ENCODE measurements at regions of chr2 and their contacts with region 1.

Region 1: GRCh38 chr2:39124000-39124745 is 3.3 kb upstream of the SOS1 start:
- DNase-seq: peak; percentile 97
- ATAC-seq: peak; percentile 73
- H3K4me3 ChIP-seq: peak overlapping the region; percentile 72 to 96 (median 85)
- H3K4me3 Mint-ChIP-seq: peak overlapping the region; percentile 86
- H3K27ac ChIP-seq: peak overlapping the region; percentile 87 to 94
- H3K27ac Mint-ChIP-seq: peak overlapping the region; percentile 86
- H3K4me1 ChIP-seq: peaks cover 42 to 43% of the 10 kb centered on the region in 2 donors
- H3K4me1 Mint-ChIP-seq: peaks cover 54% of the 10 kb centered on the region
- H3K27me3 ChIP-seq: no peaks in the 10 kb centered on the region
- H3K27me3 Mint-ChIP-seq: no peaks in the 10 kb centered on the region
- CTCF ChIP-seq: peak; percentile 82

Region 2: DNA sequence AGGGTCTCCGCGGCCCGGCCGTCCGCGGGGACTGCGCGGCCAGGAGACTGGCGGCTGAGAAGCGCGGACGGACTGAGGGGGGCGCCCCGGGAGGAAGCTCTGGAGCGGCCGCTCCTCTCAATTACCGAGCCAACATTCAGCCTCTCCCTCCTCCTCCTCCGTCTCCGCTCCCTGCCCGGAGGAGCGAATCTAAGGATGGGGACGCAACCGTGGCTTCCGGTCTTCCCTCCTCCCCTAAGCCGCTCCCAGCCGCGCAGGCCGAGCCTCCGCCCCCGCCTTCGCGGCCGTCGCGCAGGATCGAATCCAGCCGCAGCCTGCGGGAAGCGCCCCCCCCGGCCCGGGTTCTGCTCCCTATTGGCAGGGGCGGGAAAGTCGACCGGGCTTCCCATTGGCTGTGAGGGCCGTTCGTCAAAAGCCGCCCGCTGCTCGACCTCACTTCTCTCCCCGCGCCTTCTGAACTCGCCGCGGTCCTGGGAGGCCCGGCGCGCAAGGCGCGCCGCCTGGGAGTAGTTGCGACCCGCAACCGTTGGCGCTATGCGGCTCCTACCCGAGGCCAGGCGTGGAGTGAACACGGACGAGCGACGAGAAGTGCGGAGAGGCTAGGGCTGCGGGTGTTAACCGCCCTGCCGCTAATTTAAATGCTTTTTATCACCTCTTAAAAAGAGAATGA is 521.3 kb before region 1 on chr2 and contains the start of gene HNRNPLL:
- CTCF ChIA-PET with region 1: no interaction called
- POLR2A ChIA-PET with region 1: no interaction called
- intact Hi-C with region 1: loop called (anchors 2 kb)
- DNase-seq: peak; percentile 89
- ATAC-seq: peak; percentile 86
- H3K4me3 ChIP-seq: peak within 1 kb of the TSS; percentile 71 to 83 (median 81)
- H3K4me3 Mint-ChIP-seq: peak within 1 kb of the TSS; percentile 93
- H3K27ac ChIP-seq: peak within 1 kb of the TSS in 1 of 2 donors; percentile 38
- H3K27ac Mint-ChIP-seq: peak within 1 kb of the TSS; percentile 86
- H3K4me1 ChIP-seq: peaks cover 13 to 27% of the 10 kb centered on the region in 2 donors
- H3K4me1 Mint-ChIP-seq: peaks cover 22% of the 10 kb centered on the region
- H3K27me3 ChIP-seq: peaks cover 0 to 52% (median 32%) of the 10 kb centered on the region in 4 experiments
- H3K27me3 Mint-ChIP-seq: peaks cover 35% of the 10 kb centered on the region
- CTCF ChIP-seq: no peak
- total RNA-seq, gene HNRNPLL: 5.8 and 6.7 TPM in 2 replicates

Region 3: GRCh38 chr2:38947240-38948239 is 176.6 kb before region 1 on chr2:
- CTCF ChIA-PET with region 1: interaction called, 10 read pairs
- POLR2A ChIA-PET with region 1: no interaction called
- intact Hi-C with region 1: no loop called
- DNase-seq: peak; percentile 65
- ATAC-seq: peak; percentile 57
- H3K4me3 ChIP-seq: no peak overlapping the region
- H3K4me3 Mint-ChIP-seq: no peak overlapping the region
- H3K27ac ChIP-seq: no peak overlapping the region
- H3K27ac Mint-ChIP-seq: no peak overlapping the region
- H3K4me1 ChIP-seq: no peaks in the 10 kb centered on the region
- H3K4me1 Mint-ChIP-seq: no peaks in the 10 kb centered on the region
- H3K27me3 ChIP-seq: no peaks in the 10 kb centered on the region
- H3K27me3 Mint-ChIP-seq: no peaks in the 10 kb centered on the region
- CTCF ChIP-seq: peak; percentile 77

Region 4: DNA sequence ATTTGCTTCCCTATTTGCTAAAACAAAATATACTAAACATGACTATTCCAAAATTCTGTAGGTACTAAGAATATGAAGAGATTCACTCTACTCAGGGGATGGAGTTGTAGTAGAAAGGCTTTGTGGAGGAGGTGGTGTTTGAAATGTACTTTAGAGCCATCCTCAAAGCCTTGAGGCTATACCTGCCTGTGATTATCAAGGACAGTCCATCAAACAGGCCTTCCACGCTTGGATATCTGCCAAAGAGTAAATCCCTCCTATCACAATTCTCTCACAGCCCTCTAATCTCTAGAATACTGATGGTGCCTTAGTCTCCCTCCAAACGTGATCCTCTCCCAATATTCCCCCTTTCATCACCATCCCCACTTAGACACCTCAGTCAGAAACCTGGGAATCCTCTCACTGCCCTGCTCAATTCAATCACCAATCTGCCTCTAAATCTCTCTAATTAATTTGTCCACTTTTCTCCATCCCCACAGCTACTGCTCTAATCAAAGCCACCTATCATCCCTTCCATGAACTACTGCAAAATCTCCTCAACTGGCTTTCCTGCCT is 16.4 kb before region 1 on chr2:
- CTCF ChIA-PET with region 1: interaction called, 14 read pairs
- POLR2A ChIA-PET with region 1: interaction called, 6 read pairs
- intact Hi-C with region 1: no loop called
- DNase-seq: no peak
- ATAC-seq: no peak
- H3K4me3 ChIP-seq: no peak overlapping the region
- H3K4me3 Mint-ChIP-seq: no peak overlapping the region
- H3K27ac ChIP-seq: peak overlapping the region in 1 of 2 donors; percentile 25
- H3K27ac Mint-ChIP-seq: peak overlapping the region; percentile 1
- H3K4me1 ChIP-seq: peaks cover 16% of the 10 kb centered on the region in 2 donors
- H3K4me1 Mint-ChIP-seq: peaks cover 60% of the 10 kb centered on the region
- H3K27me3 ChIP-seq: no peaks in the 10 kb centered on the region
- H3K27me3 Mint-ChIP-seq: no peaks in the 10 kb centered on the region
- CTCF ChIP-seq: no peak

Region 5: DNA sequence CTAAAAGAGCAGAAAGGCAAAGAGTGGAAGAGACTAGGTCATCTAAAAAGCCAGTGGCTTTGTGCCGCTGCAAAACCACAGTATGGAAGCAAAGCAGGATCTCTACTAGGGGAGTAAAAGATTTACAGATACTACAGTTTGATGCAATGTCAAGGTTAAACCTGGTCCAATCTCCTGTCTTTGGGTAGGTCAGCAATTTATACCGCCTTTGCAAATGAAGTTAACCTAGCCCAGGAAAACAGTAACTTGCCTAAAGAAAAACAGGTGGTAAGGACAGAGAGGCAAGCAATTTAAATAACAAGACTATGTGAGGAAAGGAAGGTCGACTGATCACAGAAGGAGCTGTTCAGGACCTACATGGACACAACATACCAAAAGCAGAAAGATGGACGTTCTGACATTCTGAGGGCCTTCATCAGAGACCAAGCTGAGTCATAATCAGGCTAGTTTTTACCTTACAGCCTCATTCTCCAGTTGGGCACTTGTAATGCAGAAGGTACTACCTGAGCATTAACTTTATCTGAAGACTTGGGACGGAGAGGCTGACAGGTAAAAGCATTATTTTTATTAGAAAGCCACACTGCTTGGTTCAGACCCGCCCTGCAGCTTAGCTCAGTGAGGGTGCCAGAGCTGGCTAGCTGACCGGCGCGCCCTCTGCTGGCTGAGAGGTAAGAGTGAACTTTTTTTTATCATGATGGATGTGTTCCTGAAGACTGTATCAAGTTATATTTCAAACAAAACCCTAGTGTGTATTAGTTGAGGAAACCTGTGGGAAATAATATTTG is 103.6 kb after region 1 on chr2:
- CTCF ChIA-PET with region 1: interaction called, 174 read pairs
- POLR2A ChIA-PET with region 1: interaction called, 12 read pairs
- intact Hi-C with region 1: loop called (anchors 1 kb)
- DNase-seq: peak; percentile 85
- ATAC-seq: peak; percentile 87
- H3K4me3 ChIP-seq: peak overlapping the region in 1 of 5 experiments; percentile 16
- H3K4me3 Mint-ChIP-seq: peak overlapping the region; percentile 77
- H3K27ac ChIP-seq: no peak overlapping the region
- H3K27ac Mint-ChIP-seq: no peak overlapping the region
- H3K4me1 ChIP-seq: peaks cover 6 to 11% of the 10 kb centered on the region in 2 donors
- H3K4me1 Mint-ChIP-seq: peaks cover 12% of the 10 kb centered on the region
- H3K27me3 ChIP-seq: no peaks in the 10 kb centered on the region
- H3K27me3 Mint-ChIP-seq: no peaks in the 10 kb centered on the region
- CTCF ChIP-seq: peak; percentile 92

Region 6: DNA sequence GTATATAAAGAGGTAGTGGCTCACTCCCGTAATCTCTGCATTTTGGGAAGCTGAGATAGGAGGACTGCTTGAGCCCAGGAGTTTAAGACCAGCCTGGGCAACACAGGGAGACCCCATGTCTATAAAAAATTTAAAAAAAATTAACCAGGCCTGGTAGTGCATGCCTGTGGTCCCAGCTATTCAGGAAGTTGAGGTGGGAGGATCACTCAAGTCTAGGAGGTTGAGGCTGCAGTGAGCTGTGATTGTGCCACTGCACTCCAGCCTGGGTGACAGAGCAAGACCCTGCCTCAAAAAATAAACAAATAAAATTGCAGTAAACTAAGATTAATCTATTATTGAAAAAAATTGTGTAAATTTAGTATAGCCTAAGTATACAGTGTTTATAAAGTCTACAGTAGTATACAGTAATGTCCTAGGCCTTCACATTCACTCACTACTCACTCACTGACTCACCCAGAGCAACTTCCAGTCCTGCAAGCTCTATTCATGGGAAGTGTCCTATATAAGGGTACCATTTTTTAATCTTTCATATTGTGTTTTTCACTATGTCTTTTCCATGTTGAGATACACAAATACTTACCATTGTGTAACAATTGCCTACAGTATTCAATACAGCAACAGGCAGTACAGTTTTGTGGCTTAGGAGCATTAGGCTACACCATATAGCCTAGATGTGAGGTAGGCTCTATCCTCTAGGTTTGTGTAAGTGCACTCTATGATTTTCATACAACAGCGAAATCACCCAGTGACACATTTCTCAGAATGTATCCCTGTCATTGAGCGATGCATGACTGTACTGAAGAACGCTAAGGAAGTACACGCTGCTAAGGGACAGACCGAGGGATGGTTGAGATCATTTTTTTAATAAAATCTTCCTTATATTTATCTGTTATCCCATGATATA is 323.3 kb after region 1 on chr2:
- CTCF ChIA-PET with region 1: no interaction called
- POLR2A ChIA-PET with region 1: no interaction called
- intact Hi-C with region 1: no loop called
- DNase-seq: no peak
- ATAC-seq: no peak
- H3K4me3 ChIP-seq: no peak overlapping the region
- H3K4me3 Mint-ChIP-seq: no peak overlapping the region
- H3K27ac ChIP-seq: no peak overlapping the region
- H3K27ac Mint-ChIP-seq: no peak overlapping the region
- H3K4me1 ChIP-seq: no peaks in the 10 kb centered on the region
- H3K4me1 Mint-ChIP-seq: no peaks in the 10 kb centered on the region
- H3K27me3 ChIP-seq: no peaks in the 10 kb centered on the region
- H3K27me3 Mint-ChIP-seq: no peaks in the 10 kb centered on the region
- CTCF ChIP-seq: no peak